ENCODE measurements at regions of chr4 and their contacts with region 1.

Region 1: DNA sequence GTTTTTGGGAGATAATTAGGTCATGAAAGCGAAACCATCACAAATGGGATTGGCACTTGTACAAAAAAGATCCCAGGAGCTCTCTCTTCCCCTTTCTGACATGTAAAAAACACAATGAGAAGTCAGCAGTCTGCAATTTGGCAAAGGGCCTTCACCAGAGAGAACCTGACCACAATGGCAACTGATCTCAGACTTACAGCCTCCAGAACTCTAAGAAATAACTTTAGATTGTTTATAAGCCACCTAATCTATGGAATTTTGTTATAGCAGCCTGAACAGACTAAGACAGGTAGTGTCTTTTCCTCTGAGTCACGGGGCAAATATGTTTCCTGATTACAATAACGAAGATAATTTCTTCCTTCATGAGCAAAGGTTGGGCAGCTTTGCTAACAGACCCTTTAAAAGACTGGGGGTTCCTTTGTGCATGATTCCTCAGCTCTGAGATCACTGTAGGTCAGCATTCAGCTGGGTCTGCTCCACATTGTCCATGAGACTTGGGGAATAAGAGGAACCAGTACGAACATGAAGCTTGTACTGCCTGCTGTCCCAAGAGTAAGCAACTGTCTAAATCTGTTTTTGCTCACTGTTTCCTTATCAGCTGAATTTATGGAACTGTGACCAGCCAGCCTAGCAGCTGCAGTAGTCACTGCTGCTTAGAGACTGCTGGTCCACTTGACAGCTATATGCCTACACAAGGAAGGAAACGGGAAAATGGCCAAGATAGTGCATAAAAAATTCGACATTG is 191.6 kb downstream of the ANAPC10 start:
- DNase-seq: peak; percentile 44
- H3K4me3 ChIP-seq: no peak overlapping the region
- H3K27ac ChIP-seq: peak overlapping the region; percentile 30
- H3K4me1 ChIP-seq: peaks cover 34% of the 10 kb centered on the region
- H3K27me3 ChIP-seq: no peaks in the 10 kb centered on the region
- CTCF ChIP-seq: no peak

Region 2: GRCh38 chr4:144861471-144861870 is 44.9 kb before region 1 on chr4:
- CTCF ChIA-PET with region 1: interaction called, 30 read pairs
- dilution Hi-C with region 1: no loop called
- in situ Hi-C with region 1: no loop called
- intact Hi-C with region 1: no loop called
- DNase-seq: no peak
- H3K4me3 ChIP-seq: no peak overlapping the region
- H3K27ac ChIP-seq: no peak overlapping the region
- H3K4me1 ChIP-seq: no peaks in the 10 kb centered on the region
- H3K27me3 ChIP-seq: no peaks in the 10 kb centered on the region
- CTCF ChIP-seq: no peak

Region 3: GRCh38 chr4:145034727-145035211 is 128.4 kb after region 1 on chr4:
- CTCF ChIA-PET with region 1: no interaction called
- dilution Hi-C with region 1: no loop called
- in situ Hi-C with region 1: no loop called
- intact Hi-C with region 1: loop called (anchors 10 kb)
- DNase-seq: peak; percentile 54
- H3K4me3 ChIP-seq: no peak overlapping the region
- H3K27ac ChIP-seq: no peak overlapping the region
- H3K4me1 ChIP-seq: peaks cover 12% of the 10 kb centered on the region
- H3K27me3 ChIP-seq: no peaks in the 10 kb centered on the region
- CTCF ChIP-seq: no peak

Region 4: GRCh38 chr4:145047151-145047550 is 140.8 kb after region 1 on chr4:
- CTCF ChIA-PET with region 1: no interaction called
- dilution Hi-C with region 1: loop called (anchors 5 kb)
- in situ Hi-C with region 1: no loop called
- intact Hi-C with region 1: no loop called
- DNase-seq: no peak
- H3K4me3 ChIP-seq: no peak overlapping the region
- H3K27ac ChIP-seq: no peak overlapping the region
- H3K4me1 ChIP-seq: no peaks in the 10 kb centered on the region
- H3K27me3 ChIP-seq: no peaks in the 10 kb centered on the region
- CTCF ChIP-seq: no peak